PC-3 (cell line): ENCODE measurements at regions of chr4 and their contacts with region 1.

Region 1: DNA sequence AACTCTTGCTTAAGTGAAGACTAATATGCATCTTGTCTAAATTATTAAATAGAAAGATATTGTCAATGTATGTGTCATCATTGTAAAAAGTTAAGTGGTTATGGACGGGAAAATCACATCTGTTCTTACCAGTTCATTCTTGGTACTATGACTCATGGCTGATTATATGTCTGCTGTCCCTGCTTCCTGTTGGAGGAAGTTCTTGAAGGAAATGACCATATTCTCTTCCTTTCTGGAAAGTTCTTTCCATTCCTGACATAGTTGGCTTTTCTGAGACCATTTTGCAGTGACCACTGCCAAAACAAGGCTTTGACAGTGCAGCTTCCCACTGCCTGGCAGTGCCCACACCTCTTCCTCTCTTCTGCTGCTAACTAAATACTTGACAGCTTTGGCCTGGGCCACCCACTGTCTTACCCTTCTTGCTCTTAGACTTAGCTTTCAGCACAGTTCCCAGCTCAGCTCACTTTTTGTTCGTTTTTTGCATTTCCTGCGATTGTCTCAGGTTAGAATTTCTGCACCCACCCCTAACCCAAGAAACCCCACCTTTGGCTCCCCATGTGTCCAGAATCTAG is 13.2 kb upstream of the CLDN24 start:
- DNase-seq: peak; percentile 88
- ATAC-seq: peak; percentile 67
- H3K4me3 ChIP-seq: no peak overlapping the region
- H3K27ac ChIP-seq: peak overlapping the region; percentile 96
- H3K4me1 ChIP-seq: peaks cover 26% of the 10 kb centered on the region
- H3K27me3 ChIP-seq: no peaks in the 10 kb centered on the region
- CTCF ChIP-seq: no peak

Region 2: DNA sequence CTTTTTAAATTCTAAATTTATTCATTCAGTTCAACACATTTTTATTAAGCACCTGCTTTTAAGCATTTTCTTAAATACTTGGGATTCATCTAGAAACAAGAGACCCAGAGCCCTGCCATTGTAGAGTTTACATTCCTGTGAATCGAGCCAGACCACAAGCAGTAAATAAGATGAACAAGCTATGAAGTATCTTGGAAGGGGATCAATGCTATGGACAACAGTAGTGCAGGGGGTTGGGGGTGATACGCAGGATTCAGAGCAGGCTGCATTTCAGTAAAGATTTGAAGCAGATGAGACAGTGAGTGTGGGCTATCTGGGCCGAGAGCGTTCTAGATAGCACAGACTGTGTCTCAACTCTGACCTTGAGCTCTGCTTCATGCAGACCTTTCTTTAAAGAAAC is 50.5 kb before region 1 on chr4:
- CTCF ChIA-PET with region 1: no interaction called
- POLR2A ChIA-PET with region 1: no interaction called
- intact Hi-C with region 1: loop called (anchors 2 kb)
- DNase-seq: peak; percentile 48
- ATAC-seq: peak; percentile 94
- H3K4me3 ChIP-seq: no peak overlapping the region
- H3K27ac ChIP-seq: no peak overlapping the region
- H3K4me1 ChIP-seq: peaks cover 16% of the 10 kb centered on the region; the same call in 1 of the 2 replicates
- H3K27me3 ChIP-seq: no peaks in the 10 kb centered on the region
- CTCF ChIP-seq: no peak

Region 3: GRCh38 chr4:183398227-183399125 is 63.0 kb after region 1 on chr4:
- CTCF ChIA-PET with region 1: no interaction called
- POLR2A ChIA-PET with region 1: no interaction called
- intact Hi-C with region 1: loop called (anchors 5 kb)
- DNase-seq: peak; percentile 68
- ATAC-seq: peak; percentile 90
- H3K4me3 ChIP-seq: peak overlapping the region; percentile 64
- H3K27ac ChIP-seq: no peak overlapping the region
- H3K4me1 ChIP-seq: peaks cover 11% of the 10 kb centered on the region
- H3K27me3 ChIP-seq: no peaks in the 10 kb centered on the region
- CTCF ChIP-seq: peak; percentile 62